ENCODE measurements at regions of chr18 and their contacts with region 1.

Region 1: GRCh38 chr18:73688847-73689711 is 458.6 kb downstream of the FBXO15 start:
- DNase-seq: no peak
- ATAC-seq: no peak
- H3K4me3 ChIP-seq: no peak overlapping the region
- H3K27ac ChIP-seq: peak overlapping the region in 1 of 10 donors; percentile 50
- H3K4me1 ChIP-seq: peaks cover 0 to 9% (median 0%) of the 10 kb centered on the region in 9 donors
- H3K27me3 ChIP-seq: peaks cover 0 to 7% (median 5%) of the 10 kb centered on the region in 7 donors
- CTCF ChIP-seq: no peak

Region 2: GRCh38 chr18:73168236-73168635 is 520.8 kb before region 1 on chr18:
- intact Hi-C with region 1: no loop called
- DNase-seq: no peak
- ATAC-seq: no peak
- H3K4me3 ChIP-seq: no peak overlapping the region
- H3K27ac ChIP-seq: no peak overlapping the region
- H3K4me1 ChIP-seq: no peaks in the 10 kb centered on the region
- H3K27me3 ChIP-seq: no peaks in the 10 kb centered on the region
- CTCF ChIP-seq: no peak

Region 3: DNA sequence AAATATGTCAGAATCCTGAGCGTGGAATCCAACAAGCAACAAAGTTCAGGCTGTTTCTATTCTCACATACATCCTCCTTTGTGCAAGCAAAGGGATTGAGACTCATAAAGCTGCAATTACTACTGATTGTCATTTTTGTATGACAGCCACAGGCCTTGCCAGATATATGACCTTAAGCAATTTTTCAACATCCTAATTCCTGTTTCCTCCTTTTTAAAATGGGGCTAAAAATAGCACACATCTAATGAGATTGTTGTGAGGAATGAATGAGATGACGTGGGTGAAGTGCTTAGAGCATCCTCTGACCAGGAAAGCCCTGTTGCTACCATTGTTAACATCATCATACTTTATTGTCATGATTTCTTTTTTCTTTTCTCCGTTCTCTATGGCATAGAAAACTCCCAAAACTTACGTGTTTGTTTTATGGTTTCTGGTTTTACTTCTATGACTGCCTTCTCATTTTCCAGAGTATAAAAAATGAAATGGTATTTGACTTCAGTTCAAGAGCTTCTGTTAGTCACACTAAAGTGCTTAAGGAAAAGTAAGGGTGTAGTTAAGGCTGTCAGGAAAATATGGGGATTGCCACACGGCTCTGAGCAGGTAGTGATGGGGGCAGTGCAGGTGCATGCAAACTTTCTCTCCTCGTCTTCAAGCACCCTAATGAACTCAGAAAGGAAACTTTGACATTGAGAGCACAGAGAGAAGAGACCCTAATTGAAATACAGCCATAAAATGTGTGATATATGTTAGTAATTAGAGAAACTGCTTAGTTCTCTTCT is 230.7 kb before region 1 on chr18:
- intact Hi-C with region 1: loop called in 1 of 10 experiments (anchors 5 kb)
- DNase-seq: no peak
- ATAC-seq: peak in 7 of 8 donors; percentile 40 to 85 (median 72)
- H3K4me3 ChIP-seq: no peak overlapping the region
- H3K27ac ChIP-seq: peak overlapping the region in 5 of 10 donors; percentile 32 to 82 (median 62)
- H3K4me1 ChIP-seq: peaks cover 0 to 20% (median 6%) of the 10 kb centered on the region in 9 donors
- H3K27me3 ChIP-seq: no peaks in the 10 kb centered on the region
- CTCF ChIP-seq: no peak

Region 4: DNA sequence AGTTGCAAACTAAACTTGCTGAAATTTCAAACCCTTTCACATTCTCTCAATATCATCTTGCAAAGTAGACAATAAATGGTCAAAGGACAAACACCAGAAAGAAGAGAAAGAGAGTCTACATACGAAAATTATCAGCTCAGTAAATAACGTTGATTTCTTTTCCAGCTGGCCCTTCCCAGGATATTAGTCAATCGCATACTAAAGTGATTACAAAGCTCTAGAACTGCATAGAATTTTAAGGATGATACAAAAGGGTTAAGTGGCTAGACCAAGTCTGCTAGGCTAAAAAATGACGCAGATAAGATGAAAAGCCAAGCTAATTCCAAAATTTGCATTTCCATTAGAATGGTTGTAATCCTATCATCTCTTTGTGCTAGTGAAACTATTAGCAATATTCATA is 52.9 kb after region 1 on chr18:
- intact Hi-C with region 1: loop called in 1 of 10 experiments (anchors 10 kb)
- DNase-seq: no peak
- ATAC-seq: no peak
- H3K4me3 ChIP-seq: no peak overlapping the region
- H3K27ac ChIP-seq: no peak overlapping the region
- H3K4me1 ChIP-seq: peaks cover 0 to 10% (median 0%) of the 10 kb centered on the region in 9 donors
- H3K27me3 ChIP-seq: no peaks in the 10 kb centered on the region
- CTCF ChIP-seq: no peak

Measured in heart right ventricle (tissue), 16 donors.